Panc1 (cell line): ENCODE measurements at regions of chr14 and their contacts with region 1.

Region 1: GRCh38 chr14:23320774-23321571 is at the start of gene PABPN1:
- DNase-seq: peak; percentile 97
- ATAC-seq: peak; percentile 95
- H3K4me3 ChIP-seq: peak within 1 kb of the TSS; percentile 93 to 97
- H3K27ac ChIP-seq: peak within 1 kb of the TSS; percentile 95
- H3K4me1 ChIP-seq: peaks cover 7% of the 10 kb centered on the region
- H3K27me3 ChIP-seq: no peaks in the 10 kb centered on the region
- CTCF ChIP-seq: no peak
- total RNA-seq, gene PABPN1: 159 TPM

Region 2: DNA sequence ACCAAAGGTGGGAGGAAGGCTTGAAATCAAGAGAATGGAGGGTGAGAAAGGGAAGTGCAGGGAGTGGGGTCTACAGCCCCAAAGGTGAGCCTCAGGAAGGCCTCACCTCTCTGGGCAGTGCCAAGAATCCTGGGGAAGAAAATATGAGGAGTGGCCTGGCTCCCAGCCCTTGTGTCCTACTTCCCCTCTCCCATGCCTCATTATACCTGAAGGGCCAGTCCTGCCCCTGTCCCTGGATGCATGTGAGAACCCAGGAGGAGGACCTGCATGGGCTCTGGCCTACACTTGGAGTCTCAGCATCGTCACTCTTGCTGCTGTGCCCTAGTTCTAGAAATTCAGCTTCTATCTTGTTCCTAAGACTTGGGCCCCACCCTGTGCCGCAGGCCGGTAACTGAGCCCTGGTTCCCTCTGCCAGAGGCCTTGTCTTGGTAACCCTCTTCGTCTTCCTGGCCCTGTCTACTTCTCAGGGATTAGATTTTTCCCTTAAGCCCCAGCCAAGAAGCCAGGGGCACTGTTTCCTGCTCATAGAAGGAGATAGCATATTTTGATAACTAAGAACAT is 125.4 kb after region 1 on chr14:
- CTCF ChIA-PET with region 1: no interaction called
- POLR2A ChIA-PET with region 1: no interaction called
- in situ Hi-C with region 1: no loop called
- intact Hi-C with region 1: loop called (anchors 10 kb)
- DNase-seq: no peak
- ATAC-seq: no peak
- H3K4me3 ChIP-seq: no peak overlapping the region
- H3K27ac ChIP-seq: no peak overlapping the region
- H3K4me1 ChIP-seq: no peaks in the 10 kb centered on the region
- H3K27me3 ChIP-seq: peaks cover 2% of the 10 kb centered on the region
- CTCF ChIP-seq: no peak

Region 3: DNA sequence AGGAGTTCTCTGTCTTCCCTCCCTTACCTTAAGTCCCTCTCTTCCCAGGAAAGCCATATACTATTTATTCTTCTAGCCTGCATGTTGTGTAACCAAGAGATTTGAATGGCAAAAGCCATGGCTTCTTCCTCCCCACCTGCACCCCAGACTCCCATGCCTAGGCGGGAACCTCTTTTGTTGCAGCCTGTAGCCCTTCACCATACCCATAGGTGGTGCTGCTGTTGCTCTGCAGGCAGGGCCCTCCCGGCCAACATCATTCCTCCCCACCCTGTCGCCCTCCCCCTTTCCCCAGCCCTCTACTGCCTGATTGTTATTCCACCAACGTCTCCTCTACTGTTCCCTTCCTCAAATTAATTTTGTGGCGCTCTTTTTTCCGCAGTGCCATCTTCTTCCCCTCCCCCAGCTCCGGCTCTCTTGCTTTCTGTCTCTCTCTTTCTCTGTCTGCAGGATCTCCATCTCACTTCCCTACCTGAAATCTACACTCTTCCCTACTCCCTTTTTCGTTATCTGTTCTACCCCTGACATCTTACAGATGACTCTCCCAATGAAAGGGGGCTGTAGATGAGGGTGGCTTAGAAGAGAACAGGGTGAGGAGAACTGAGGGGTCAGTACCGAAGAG is 162.4 kb after region 1 on chr14:
- CTCF ChIA-PET with region 1: no interaction called
- POLR2A ChIA-PET with region 1: no interaction called
- in situ Hi-C with region 1: no loop called
- intact Hi-C with region 1: no loop called
- DNase-seq: no peak
- ATAC-seq: peak; percentile 88
- H3K4me3 ChIP-seq: no peak overlapping the region
- H3K27ac ChIP-seq: no peak overlapping the region
- H3K4me1 ChIP-seq: no peaks in the 10 kb centered on the region
- H3K27me3 ChIP-seq: no peaks in the 10 kb centered on the region
- CTCF ChIP-seq: peak; percentile 67